Caco-2 (cell line): ENCODE measurements at regions of chr10 and their contacts with region 1.

Region 1: DNA sequence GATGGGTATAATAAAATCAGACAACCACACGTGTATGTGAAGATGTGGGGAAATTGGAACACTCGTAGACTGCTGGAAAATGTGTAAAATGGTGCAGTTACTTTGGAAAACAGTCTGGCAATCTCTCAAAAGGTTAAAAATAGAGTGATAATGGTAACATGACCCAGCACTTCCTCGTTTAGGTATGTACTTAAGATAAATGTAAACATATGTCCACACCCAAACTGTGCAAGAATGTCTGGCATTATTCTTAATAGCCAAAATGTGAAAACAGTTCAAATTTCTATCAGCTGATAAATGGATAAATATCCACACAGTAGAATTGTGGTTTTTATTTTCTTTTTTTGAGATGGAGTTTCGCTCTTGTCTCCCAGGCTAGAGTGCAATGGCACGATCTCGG is 272.8 kb downstream of the ZNF248 start:
- DNase-seq: no peak
- H3K4me3 ChIP-seq: no peak overlapping the region
- H3K4me3 Mint-ChIP-seq: no peak overlapping the region
- H3K27ac Mint-ChIP-seq: no peak overlapping the region
- H3K4me1 ChIP-seq: no peaks in the 10 kb centered on the region
- H3K4me1 Mint-ChIP-seq: no peaks in the 10 kb centered on the region
- H3K27me3 ChIP-seq: no peaks in the 10 kb centered on the region
- H3K27me3 Mint-ChIP-seq: no peaks in the 10 kb centered on the region
- CTCF ChIP-seq: no peak

Region 2: GRCh38 chr10:37534166-37534565 is 50.5 kb before region 1 on chr10:
- CTCF ChIA-PET with region 1: no interaction called
- POLR2A ChIA-PET with region 1: no interaction called
- intact Hi-C with region 1: loop called (anchors 5 kb)
- DNase-seq: no peak
- H3K4me3 ChIP-seq: no peak overlapping the region
- H3K4me3 Mint-ChIP-seq: no peak overlapping the region
- H3K27ac Mint-ChIP-seq: no peak overlapping the region
- H3K4me1 ChIP-seq: no peaks in the 10 kb centered on the region
- H3K4me1 Mint-ChIP-seq: no peaks in the 10 kb centered on the region
- H3K27me3 ChIP-seq: no peaks in the 10 kb centered on the region
- H3K27me3 Mint-ChIP-seq: no peaks in the 10 kb centered on the region
- CTCF ChIP-seq: no peak

Region 3: GRCh38 chr10:37619336-37619735 is 34.7 kb after region 1 on chr10:
- CTCF ChIA-PET with region 1: no interaction called
- POLR2A ChIA-PET with region 1: no interaction called
- intact Hi-C with region 1: no loop called
- DNase-seq: no peak
- H3K4me3 ChIP-seq: no peak overlapping the region
- H3K4me3 Mint-ChIP-seq: no peak overlapping the region
- H3K27ac Mint-ChIP-seq: no peak overlapping the region
- H3K4me1 ChIP-seq: peaks cover 12% of the 10 kb centered on the region
- H3K4me1 Mint-ChIP-seq: no peaks in the 10 kb centered on the region
- H3K27me3 ChIP-seq: no peaks in the 10 kb centered on the region
- H3K27me3 Mint-ChIP-seq: no peaks in the 10 kb centered on the region
- CTCF ChIP-seq: no peak

Region 4: GRCh38 chr10:37765216-37765615 is 180.6 kb after region 1 on chr10:
- CTCF ChIA-PET with region 1: no interaction called
- POLR2A ChIA-PET with region 1: no interaction called
- intact Hi-C with region 1: no loop called
- DNase-seq: no peak
- H3K4me3 ChIP-seq: no peak overlapping the region
- H3K4me3 Mint-ChIP-seq: no peak overlapping the region
- H3K27ac Mint-ChIP-seq: no peak overlapping the region
- H3K4me1 ChIP-seq: no peaks in the 10 kb centered on the region
- H3K4me1 Mint-ChIP-seq: no peaks in the 10 kb centered on the region
- H3K27me3 ChIP-seq: no peaks in the 10 kb centered on the region
- H3K27me3 Mint-ChIP-seq: no peaks in the 10 kb centered on the region
- CTCF ChIP-seq: no peak